Endothelial cell of umbilical vein (primary cell): ENCODE measurements at regions of chr9 and their contacts with region 1.

Region 1: GRCh38 chr9:122498883-122499288 is 11.7 kb upstream of the OR1J2 start:
- DNase-seq: peak; percentile 56
- H3K4me3 ChIP-seq: no peak overlapping the region
- H3K27ac ChIP-seq: no peak overlapping the region
- H3K4me1 ChIP-seq: no peaks in the 10 kb centered on the region
- H3K27me3 ChIP-seq: peaks cover 4 to 31% of the 10 kb centered on the region in 2 experiments
- CTCF ChIP-seq: peak; percentile 80 to 85
- POLR2A ChIP-seq: no peak

Region 2: DNA sequence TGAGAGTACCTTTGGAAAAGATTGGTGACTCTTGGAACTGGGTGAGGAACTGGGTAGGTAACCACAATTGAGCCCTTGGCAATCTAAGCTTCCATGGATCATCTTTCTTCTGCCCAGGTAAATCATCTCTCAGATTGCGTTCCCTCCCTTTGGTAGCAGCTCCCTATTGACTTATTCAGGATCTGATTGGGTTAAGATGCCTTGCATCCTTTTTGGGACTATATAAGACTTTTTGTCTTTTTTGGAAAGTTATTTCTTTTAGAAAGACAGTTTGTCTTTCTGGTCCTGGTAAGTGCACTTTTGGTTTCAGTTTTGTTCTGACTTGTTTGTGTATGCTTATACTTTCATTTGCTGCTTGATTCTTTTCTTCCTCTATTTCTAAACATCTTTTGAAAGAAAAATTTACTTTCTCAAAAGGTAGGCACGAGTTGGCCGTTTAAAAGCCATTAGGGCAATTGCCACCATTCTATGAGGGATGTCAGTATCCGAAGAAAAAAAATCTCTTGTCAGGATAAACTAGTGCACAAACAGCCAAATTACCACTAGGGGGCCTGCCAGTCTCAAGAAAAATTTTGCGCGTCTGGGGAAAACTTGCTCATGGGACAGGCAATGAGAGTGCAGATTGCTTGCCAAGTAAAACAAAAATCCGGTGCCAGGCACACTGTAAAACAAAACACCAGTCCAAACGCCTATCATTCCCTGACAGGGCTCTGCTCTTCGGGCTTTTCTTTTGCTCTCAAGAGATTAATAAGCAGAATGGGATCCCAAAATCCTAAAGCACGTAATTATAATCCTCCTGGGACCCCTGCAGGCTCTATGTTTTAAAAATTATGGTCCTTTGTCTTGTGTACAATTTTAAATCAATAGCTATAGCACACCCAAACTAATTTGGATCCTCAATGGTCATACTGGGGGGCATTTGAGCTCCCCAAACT is 34.0 kb before region 1 on chr9:
- CTCF ChIA-PET with region 1: interaction called, 13 read pairs
- POLR2A ChIA-PET with region 1: no interaction called
- dilution Hi-C with region 1: no loop called
- intact Hi-C with region 1: no loop called
- DNase-seq: peak; percentile 96
- H3K4me3 ChIP-seq: peak overlapping the region; percentile 24 to 96 (median 89)
- H3K27ac ChIP-seq: peak overlapping the region; percentile 26
- H3K4me1 ChIP-seq: peaks cover 7% of the 10 kb centered on the region
- H3K27me3 ChIP-seq: peaks cover 6 to 38% of the 10 kb centered on the region in 2 experiments
- CTCF ChIP-seq: peak; percentile 73 to 92
- POLR2A ChIP-seq: no peak

Region 3: DNA sequence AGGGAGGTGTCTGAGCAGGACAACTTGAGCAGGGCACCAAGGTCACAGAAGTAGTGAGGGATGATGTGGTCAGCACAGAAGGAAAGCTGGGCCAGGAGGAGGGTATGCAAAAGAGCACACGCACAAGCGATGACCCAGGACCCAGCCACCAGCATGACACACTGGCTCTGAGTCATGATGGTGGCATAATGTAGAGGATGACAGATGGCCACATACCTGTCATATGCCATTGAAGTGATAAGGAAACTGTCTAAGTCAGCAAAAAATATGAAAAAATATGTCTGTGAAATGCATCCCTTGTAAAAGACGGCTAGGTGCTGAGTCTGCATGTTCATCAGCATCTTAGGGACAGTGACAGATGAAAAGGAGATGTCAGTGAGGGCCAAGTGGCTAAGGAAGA is 21.5 kb before region 1 on chr9:
- CTCF ChIA-PET with region 1: interaction called, 26 read pairs
- POLR2A ChIA-PET with region 1: no interaction called
- dilution Hi-C with region 1: no loop called
- intact Hi-C with region 1: no loop called
- DNase-seq: no peak
- H3K4me3 ChIP-seq: no peak overlapping the region
- H3K27ac ChIP-seq: no peak overlapping the region
- H3K4me1 ChIP-seq: no peaks in the 10 kb centered on the region
- H3K27me3 ChIP-seq: peaks cover 10 to 11% of the 10 kb centered on the region in 2 experiments
- CTCF ChIP-seq: no peak
- POLR2A ChIP-seq: no peak

Region 4: DNA sequence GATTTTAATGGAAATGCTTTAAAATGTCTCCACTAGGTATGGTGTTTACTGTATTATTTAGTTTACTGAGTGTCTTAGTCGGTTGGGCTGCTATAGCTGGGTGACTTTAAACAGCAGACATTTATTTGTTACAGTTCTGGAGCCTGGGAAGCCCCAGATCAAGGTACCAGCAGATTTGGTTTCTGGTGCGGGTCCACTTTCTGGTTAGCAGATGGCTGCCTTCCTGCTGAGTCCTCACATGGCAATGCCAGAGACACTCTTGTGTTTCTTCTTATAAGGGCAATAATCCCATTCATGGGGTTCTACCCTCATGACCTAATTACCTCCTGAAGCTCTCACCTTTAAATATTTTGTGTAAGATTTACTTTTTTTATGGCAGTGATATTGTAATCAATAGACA is 19.3 kb after region 1 on chr9:
- CTCF ChIA-PET with region 1: interaction called, 14 read pairs
- POLR2A ChIA-PET with region 1: no interaction called
- dilution Hi-C with region 1: no loop called
- intact Hi-C with region 1: no loop called
- DNase-seq: no peak
- H3K4me3 ChIP-seq: no peak overlapping the region
- H3K27ac ChIP-seq: no peak overlapping the region
- H3K4me1 ChIP-seq: no peaks in the 10 kb centered on the region
- H3K27me3 ChIP-seq: peaks cover 4 to 9% of the 10 kb centered on the region in 2 experiments
- CTCF ChIP-seq: no peak
- POLR2A ChIP-seq: no peak